IMR-90 (cell line): ENCODE measurements at regions of chr2 and their contacts with region 1.

Region 1: DNA sequence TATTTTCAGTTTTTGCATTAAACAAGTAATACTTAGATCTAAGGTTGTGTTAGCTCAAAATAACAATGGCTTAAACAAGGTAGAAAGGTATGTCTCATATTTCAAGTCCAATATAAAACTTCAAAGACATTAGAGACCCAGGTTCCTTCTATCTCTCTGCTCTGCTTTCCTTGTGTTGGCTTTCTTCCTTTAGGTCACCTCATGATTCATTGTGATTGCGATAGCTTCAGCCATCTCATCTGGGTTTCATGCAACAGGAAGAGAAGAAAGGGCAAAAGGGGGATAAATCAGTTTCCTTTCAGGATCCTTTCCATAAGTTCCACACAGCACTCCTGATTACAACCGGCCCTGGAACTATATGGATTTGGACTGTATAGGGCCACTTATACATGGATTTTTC is 16.0 kb upstream of the TBR1 start:
- DNase-seq: peak; percentile 44
- ATAC-seq: no peak
- H3K4me3 ChIP-seq: no peak overlapping the region
- H3K27ac ChIP-seq: no peak overlapping the region
- H3K4me1 ChIP-seq: no peaks in the 10 kb centered on the region
- H3K27me3 ChIP-seq: no peaks in the 10 kb centered on the region
- CTCF ChIP-seq: no peak
- POLR2A ChIP-seq: no peak
- RAD21 ChIP-seq: no peak

Region 2: GRCh38 chr2:161104054-161104553 is 296.0 kb before region 1 on chr2:
- CTCF ChIA-PET with region 1: no interaction called
- POLR2A ChIA-PET with region 1: no interaction called
- dilution Hi-C with region 1: no loop called
- in situ Hi-C with region 1: no loop called
- intact Hi-C with region 1: no loop called
- DNase-seq: no peak
- ATAC-seq: no peak
- H3K4me3 ChIP-seq: no peak overlapping the region
- H3K27ac ChIP-seq: no peak overlapping the region
- H3K4me1 ChIP-seq: no peaks in the 10 kb centered on the region; the same call in 1 of the 2 replicates
- H3K27me3 ChIP-seq: no peaks in the 10 kb centered on the region
- CTCF ChIP-seq: no peak
- POLR2A ChIP-seq: no peak
- RAD21 ChIP-seq: no peak

Region 3: GRCh38 chr2:161316701-161317100 is 83.4 kb before region 1 on chr2:
- CTCF ChIA-PET with region 1: no interaction called
- POLR2A ChIA-PET with region 1: no interaction called
- dilution Hi-C with region 1: no loop called
- in situ Hi-C with region 1: no loop called
- intact Hi-C with region 1: loop called (anchors 5 kb)
- DNase-seq: peak; percentile 41
- ATAC-seq: no peak
- H3K4me3 ChIP-seq: no peak overlapping the region
- H3K27ac ChIP-seq: no peak overlapping the region
- H3K4me1 ChIP-seq: no peaks in the 10 kb centered on the region
- H3K27me3 ChIP-seq: no peaks in the 10 kb centered on the region
- CTCF ChIP-seq: no peak
- POLR2A ChIP-seq: no peak
- RAD21 ChIP-seq: no peak